GM13977 (cell line): ENCODE measurements at regions of chr4 and their contacts with region 1.

Region 1: GRCh38 chr4:39124885-39125599 is 57.3 kb upstream of the WDR19 start:
- DNase-seq: no peak
- CTCF ChIP-seq: no peak

Region 2: GRCh38 chr4:38514465-38515146 is 610.4 kb before region 1 on chr4:
- in situ Hi-C with region 1: no loop called
- DNase-seq: no peak
- CTCF ChIP-seq: no peak

Region 3: DNA sequence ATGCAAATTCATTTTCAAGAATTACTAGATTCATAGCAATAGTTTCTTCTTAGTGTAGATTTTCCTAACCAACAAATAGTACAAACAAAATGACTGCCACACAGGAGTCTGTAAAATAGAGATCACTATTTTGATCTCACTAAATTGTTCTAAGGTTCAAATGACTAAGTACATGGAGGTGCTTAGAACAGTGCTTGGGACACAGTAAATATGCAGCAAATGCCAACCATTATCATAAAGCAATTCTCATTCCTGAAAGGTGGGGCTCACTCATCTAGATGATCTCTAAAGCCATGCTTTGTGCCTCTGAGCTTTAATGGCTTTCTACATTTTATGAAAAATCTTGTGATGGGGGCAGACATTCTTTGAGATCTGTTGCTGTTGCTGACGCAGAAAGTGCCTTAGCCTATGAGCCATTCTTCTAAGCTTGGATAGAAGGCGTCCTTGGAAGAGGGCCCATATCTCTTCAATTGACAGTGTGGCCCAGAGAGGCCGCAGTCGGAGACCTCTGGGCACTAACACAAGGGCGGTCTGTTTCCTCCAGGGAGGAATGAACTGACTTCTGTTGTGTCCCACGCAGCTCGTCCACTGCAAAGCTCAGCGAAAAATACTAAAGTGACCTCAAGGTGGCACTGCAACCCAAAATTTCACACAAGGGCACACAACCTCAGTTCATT is 365.8 kb before region 1 on chr4:
- in situ Hi-C with region 1: loop called (anchors 10 kb)
- DNase-seq: peak; percentile 34
- CTCF ChIP-seq: peak; percentile 68